ENCODE measurements at regions of chr15 and their contacts with region 1.

Region 1: DNA sequence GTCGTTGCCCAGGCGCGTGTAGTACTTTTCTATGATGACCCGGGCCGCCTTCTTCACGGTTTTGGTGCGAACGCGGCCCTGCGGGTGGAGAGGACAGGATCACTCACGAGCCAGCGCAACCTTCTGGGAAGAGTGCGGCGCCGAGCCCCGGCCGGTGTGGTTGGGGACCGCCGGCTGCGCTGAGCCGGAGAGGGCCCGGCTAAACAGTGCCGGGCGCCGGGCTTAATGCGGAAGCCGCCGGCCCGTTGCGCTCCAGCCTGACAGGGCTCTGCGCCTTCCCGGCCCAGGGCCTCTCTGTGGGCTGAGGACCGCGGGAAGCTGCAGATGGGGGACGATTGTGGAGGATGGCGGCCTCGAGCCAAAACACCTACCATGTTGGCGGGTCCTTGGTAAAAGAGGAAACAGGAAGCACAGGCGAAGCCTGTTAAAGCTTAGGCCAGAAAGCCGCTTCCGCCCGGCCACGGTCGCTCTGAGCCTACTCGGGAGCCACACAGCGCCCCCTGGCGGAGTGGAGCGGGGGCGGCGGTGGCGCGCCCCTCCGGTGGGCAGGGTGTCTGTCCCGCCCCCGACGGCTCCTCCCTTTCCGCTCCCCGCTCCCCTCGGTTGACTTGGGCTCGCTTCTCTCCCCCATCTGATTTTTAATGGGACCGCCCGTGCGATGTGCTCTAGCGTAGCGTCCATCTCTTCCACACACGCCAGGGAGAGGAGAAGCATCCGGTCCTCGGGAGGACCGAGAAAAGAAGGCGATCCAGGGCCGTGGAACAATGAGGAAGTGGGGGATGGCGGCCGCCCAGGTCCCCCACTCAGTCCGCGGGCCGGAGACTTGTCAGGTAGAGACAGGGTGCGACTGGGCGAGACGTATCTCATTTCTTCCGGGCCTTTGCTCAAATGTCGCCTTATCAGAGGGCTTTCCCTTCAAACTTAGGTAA is at the start of gene RPS17:
- DNase-seq: peak; percentile 98
- H3K4me3 Mint-ChIP-seq: peak within 1 kb of the TSS; percentile 97
- H3K27ac Mint-ChIP-seq: peak within 1 kb of the TSS; percentile 95
- H3K4me1 Mint-ChIP-seq: peaks cover 47% of the 10 kb centered on the region
- H3K27me3 Mint-ChIP-seq: no peaks in the 10 kb centered on the region
- total RNA-seq, gene RPS17: 1,261 to 1,293 TPM

Region 2: GRCh38 chr15:82749951-82750830 is 209.9 kb after region 1 on chr15:
- CTCF ChIA-PET with region 1: interaction called, 11 read pairs
- POLR2A ChIA-PET with region 1: interaction called, 31 read pairs
- DNase-seq: peak; percentile 86
- H3K4me3 Mint-ChIP-seq: peak overlapping the region; percentile 96
- H3K27ac Mint-ChIP-seq: peak overlapping the region; percentile 92
- H3K4me1 Mint-ChIP-seq: peaks cover 43% of the 10 kb centered on the region
- H3K27me3 Mint-ChIP-seq: no peaks in the 10 kb centered on the region

Region 3: DNA sequence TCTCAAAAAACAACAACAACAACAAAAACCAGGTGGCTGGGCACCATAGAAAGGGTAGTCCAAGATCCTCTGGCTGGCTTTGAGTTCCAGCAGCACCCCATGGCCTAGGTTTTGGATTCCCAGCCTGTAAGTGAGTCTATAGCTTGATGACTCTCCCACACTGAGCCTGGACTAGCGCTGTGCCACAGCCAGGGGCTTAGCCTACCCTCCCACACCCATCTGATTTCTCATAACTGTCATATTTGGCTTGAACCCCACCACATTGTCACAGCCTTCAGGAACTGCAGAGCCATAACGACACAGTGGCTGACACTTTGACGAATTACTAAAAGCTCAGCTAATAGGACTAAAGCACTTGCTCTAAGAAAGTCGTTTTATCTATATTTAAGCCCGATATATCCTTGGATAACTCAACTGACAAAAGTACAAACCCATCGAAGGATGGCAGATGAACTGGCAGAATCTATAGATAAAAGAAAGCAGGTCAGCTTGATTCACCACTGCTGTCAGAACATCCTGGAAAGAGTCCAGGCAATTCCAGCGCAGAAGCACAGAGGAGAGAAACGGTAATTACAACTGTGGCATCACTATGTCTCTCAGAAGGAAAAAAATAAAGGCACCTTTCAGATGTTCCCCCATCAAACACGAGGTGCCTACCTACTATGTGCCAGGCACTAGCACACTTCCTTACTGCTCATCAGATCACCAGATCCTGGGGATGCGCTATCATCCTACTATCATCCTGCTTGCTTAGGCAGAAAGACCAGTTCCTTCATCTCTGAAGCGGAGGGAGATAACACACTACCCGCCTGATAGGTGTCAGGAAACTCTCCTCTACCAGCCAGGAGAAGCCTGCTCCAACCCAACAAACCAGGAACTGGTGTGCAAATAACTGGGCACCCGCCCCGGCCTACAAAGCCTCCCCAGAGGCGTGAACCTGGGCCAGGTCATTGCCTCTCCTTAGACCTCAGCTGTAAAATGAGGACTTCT is 350.3 kb after region 1 on chr15:
- CTCF ChIA-PET with region 1: no interaction called
- POLR2A ChIA-PET with region 1: no interaction called
- DNase-seq: no peak
- H3K4me3 Mint-ChIP-seq: no peak overlapping the region
- H3K27ac Mint-ChIP-seq: no peak overlapping the region
- H3K4me1 Mint-ChIP-seq: no peaks in the 10 kb centered on the region
- H3K27me3 Mint-ChIP-seq: no peaks in the 10 kb centered on the region

Measured in activated CD4-positive, alpha-beta memory T cell treated with anti-CD3 and anti-CD28 coated beads, Interleukin-2, amount 10 ng/mL, durations not matched to agents 7 days and 5 days (primary cell).